Activated CD4-positive, alpha-beta T cell treated with anti-CD3 and anti-CD28 coated beads, Interleukin-2, amount 10 ng/mL, durations not matched to agents 24 days and 14 days (primary cell): ENCODE measurements at regions of chr18 and their contacts with region 1.

Region 1: GRCh38 chr18:51029694-51030536 is at the start of gene SMAD4:
- DNase-seq: peak; percentile 99
- H3K4me3 Mint-ChIP-seq: peak within 1 kb of the TSS; percentile 97
- H3K27ac Mint-ChIP-seq: peak within 1 kb of the TSS; percentile 99
- H3K4me1 Mint-ChIP-seq: peaks cover 44% of the 10 kb centered on the region
- H3K27me3 Mint-ChIP-seq: no peaks in the 10 kb centered on the region
- total RNA-seq, gene SMAD4: 76.5 and 90.8 TPM in 2 replicates

Region 2: GRCh38 chr18:50819728-50820378 is 210.1 kb before region 1 on chr18 and contains the start of gene MRO:
- intact Hi-C with region 1: loop called (anchors 5 kb)
- DNase-seq: peak; percentile 93
- H3K4me3 Mint-ChIP-seq: no peak within 1 kb of the TSS
- H3K27ac Mint-ChIP-seq: no peak within 1 kb of the TSS
- H3K4me1 Mint-ChIP-seq: no peaks in the 10 kb centered on the region
- H3K27me3 Mint-ChIP-seq: peaks cover 10% of the 10 kb centered on the region
- total RNA-seq, gene MRO: not detected in 2 replicates

Region 3: DNA sequence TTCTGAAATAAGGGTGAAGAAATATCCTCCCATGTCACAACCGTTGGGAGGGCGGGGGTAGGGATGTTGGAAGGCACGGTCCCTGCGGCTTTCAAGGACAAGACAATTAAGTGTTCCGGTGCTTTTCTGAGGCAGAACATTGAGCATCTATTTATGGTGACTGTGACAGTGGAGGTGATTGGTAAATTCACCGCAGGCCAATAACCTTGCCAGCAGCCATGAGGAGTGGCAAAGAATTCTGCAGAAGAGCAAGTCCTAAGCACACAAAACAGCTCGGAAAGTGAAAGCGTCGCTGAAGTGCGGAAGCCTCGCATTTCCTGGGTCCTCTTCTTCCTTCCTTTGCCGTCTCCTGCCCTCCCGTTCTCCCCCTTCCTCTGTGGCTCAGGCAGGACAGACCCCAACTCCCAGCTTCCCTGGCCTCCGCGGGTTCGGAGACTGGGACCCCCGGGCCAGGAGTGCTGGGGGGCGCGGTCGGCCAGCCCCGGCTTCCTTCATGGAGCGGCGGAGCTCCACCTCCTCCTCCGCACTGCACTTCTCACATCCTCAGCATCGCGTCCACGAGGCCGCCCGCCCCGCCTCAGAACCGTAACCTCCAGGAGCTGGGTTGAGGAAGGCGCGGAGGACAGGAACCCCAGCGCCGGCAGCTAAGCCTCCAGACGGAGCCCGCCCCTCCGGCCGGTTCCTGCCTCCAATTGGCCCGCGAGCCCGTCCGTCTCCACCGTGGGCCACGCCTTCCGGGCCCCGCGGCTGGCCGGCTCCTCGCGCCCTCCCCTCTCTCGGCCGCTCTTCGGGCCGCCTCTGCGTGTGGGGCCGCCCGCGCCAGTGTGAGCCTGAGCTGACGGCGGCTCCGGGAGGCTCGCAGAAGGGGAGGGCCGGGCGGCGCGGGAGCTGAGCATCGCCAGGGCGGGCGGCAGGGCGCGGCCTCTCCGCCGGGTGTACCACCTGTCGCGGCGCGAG is 151.3 kb before region 1 on chr18 and contains the start of gene ME2:
- intact Hi-C with region 1: loop called (anchors 1 kb)
- DNase-seq: peak; percentile 98
- H3K4me3 Mint-ChIP-seq: peak within 1 kb of the TSS; percentile 95
- H3K27ac Mint-ChIP-seq: peak within 1 kb of the TSS; percentile 99
- H3K4me1 Mint-ChIP-seq: peaks cover 24% of the 10 kb centered on the region
- H3K27me3 Mint-ChIP-seq: peaks cover 4% of the 10 kb centered on the region
- total RNA-seq, gene ME2: 141 and 143 TPM in 2 replicates

Region 4: GRCh38 chr18:50967714-50968661 is 61.9 kb before region 1 on chr18 and contains the start of gene ELAC1:
- intact Hi-C with region 1: loop called (anchors 1 kb)
- DNase-seq: peak; percentile 91
- H3K4me3 Mint-ChIP-seq: peak within 1 kb of the TSS; percentile 97
- H3K27ac Mint-ChIP-seq: peak within 1 kb of the TSS; percentile 97
- H3K4me1 Mint-ChIP-seq: peaks cover 22% of the 10 kb centered on the region
- H3K27me3 Mint-ChIP-seq: peaks cover 2% of the 10 kb centered on the region
- total RNA-seq, gene ELAC1: 6.8 and 7.0 TPM in 2 replicates

Region 5: GRCh38 chr18:51051105-51051712 is 21.3 kb after region 1 on chr18:
- intact Hi-C with region 1: loop called (anchors 1 kb)
- DNase-seq: peak; percentile 76
- H3K4me3 Mint-ChIP-seq: no peak overlapping the region
- H3K27ac Mint-ChIP-seq: peak overlapping the region; percentile 34
- H3K4me1 Mint-ChIP-seq: peaks cover 29% of the 10 kb centered on the region
- H3K27me3 Mint-ChIP-seq: no peaks in the 10 kb centered on the region

Region 6: DNA sequence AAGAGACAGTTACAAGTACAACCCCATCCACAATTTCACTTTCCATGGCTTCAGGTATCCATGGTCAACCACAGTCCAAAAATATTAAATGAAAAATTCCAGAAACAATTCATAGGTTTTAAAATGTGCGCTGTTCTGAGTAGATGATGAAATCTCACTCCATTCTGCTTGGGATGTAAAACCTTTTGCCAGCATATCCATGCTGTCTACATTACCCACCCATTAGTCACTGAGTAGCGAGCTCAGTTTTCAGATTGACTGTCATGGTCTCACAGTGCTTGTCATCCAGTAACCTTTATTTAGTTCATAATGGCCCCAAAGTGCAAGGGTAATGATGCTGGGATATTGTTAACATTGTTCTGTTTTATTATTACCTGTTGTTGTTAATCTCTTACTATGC is 40.6 kb after region 1 on chr18:
- intact Hi-C with region 1: no loop called
- DNase-seq: no peak
- H3K4me3 Mint-ChIP-seq: no peak overlapping the region
- H3K27ac Mint-ChIP-seq: no peak overlapping the region
- H3K4me1 Mint-ChIP-seq: peaks cover 12% of the 10 kb centered on the region
- H3K27me3 Mint-ChIP-seq: no peaks in the 10 kb centered on the region

Region 7: GRCh38 chr18:51135795-51136194 is 105.9 kb after region 1 on chr18:
- intact Hi-C with region 1: no loop called
- DNase-seq: no peak
- H3K4me3 Mint-ChIP-seq: no peak overlapping the region
- H3K27ac Mint-ChIP-seq: no peak overlapping the region
- H3K4me1 Mint-ChIP-seq: no peaks in the 10 kb centered on the region
- H3K27me3 Mint-ChIP-seq: no peaks in the 10 kb centered on the region

Region 8: DNA sequence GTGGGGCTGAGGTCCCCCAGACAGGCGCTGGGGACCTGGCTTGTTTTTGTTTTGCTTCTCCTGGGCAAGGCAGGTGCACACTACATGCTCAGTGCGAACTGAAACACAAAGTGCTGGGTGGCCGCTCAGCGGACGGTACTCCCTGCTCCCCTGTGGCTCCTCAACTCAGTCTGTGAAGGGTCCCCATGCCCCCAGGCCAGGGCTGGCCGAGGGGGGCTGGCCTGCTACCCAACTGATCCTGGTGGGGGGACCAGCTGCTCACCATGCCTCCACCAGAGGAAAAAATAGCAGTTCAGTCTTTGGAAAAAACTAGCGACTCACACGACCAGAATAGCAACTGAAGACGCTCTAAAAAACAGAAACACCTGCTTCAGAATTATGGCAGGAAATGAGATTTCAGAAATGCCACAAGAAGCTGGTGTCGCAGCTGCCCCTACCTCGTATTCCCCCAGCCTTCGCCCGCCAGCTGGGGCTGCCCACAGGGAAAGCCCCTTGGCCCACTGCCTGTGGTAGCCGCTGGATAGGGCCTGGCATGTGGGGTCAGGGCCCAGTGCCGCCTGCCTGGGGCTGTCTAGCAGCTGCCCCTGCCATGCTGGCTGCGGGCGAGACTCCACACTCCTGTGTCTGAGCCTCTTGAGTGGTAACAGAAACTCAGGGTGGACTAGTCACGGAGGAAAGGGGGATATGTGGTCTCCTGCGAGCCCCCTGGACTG is 123.9 kb after region 1 on chr18:
- intact Hi-C with region 1: loop called (anchors 5 kb)
- DNase-seq: peak; percentile 86
- H3K4me3 Mint-ChIP-seq: peak overlapping the region; percentile 80
- H3K27ac Mint-ChIP-seq: peak overlapping the region; percentile 99
- H3K4me1 Mint-ChIP-seq: peaks cover 45% of the 10 kb centered on the region
- H3K27me3 Mint-ChIP-seq: no peaks in the 10 kb centered on the region